PC-9 (cell line): ENCODE measurements at regions of chr4 and their contacts with region 1.

Region 1: DNA sequence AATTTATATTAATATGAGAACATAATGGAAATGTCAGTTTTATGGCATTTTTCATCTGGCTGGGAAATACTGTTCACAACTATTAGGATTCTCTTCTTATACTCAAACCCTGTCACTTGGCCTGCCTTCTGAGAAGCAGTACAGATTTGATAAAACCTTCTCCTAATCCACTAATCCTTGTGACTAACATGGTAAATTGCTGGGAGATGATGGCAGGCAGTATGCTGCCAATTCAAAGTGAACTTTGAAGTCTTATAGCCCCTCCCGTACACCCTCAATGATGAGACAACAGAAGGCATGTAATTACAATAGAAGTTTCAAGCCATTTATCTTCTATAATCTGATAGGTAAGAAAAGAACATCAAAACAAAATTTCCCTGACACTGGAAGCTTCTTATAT is 36.9 kb downstream of the PAQR3 start:
- DNase-seq: no peak
- H3K4me3 ChIP-seq: no peak overlapping the region
- H3K27ac ChIP-seq: no peak overlapping the region
- H3K4me1 ChIP-seq: no peaks in the 10 kb centered on the region
- H3K27me3 ChIP-seq: no peaks in the 10 kb centered on the region
- CTCF ChIP-seq: no peak

Region 2: GRCh38 chr4:77833126-77833724 is 1069.1 kb before region 1 on chr4:
- CTCF ChIA-PET with region 1: no interaction called
- POLR2A ChIA-PET with region 1: interaction called, 78 read pairs
- intact Hi-C with region 1: no loop called
- DNase-seq: no peak
- H3K4me3 ChIP-seq: no peak overlapping the region
- H3K27ac ChIP-seq: no peak overlapping the region
- H3K4me1 ChIP-seq: 0 out of 2 replicates have a peak, but pooled peaks cover 5% of the 10 kb centered on the region
- H3K27me3 ChIP-seq: no peaks in the 10 kb centered on the region
- CTCF ChIP-seq: no peak

Region 3: GRCh38 chr4:78638337-78639172 is 263.7 kb before region 1 on chr4:
- CTCF ChIA-PET with region 1: no interaction called
- POLR2A ChIA-PET with region 1: interaction called, 11 read pairs
- intact Hi-C with region 1: no loop called
- DNase-seq: no peak
- H3K4me3 ChIP-seq: no peak overlapping the region
- H3K27ac ChIP-seq: no peak overlapping the region
- H3K4me1 ChIP-seq: peaks cover 11% of the 10 kb centered on the region
- H3K27me3 ChIP-seq: no peaks in the 10 kb centered on the region
- CTCF ChIP-seq: no peak